Head of caudate nucleus (tissue), 42 donors: ENCODE measurements at regions of chr6 and their contacts with region 1.

Region 1: DNA sequence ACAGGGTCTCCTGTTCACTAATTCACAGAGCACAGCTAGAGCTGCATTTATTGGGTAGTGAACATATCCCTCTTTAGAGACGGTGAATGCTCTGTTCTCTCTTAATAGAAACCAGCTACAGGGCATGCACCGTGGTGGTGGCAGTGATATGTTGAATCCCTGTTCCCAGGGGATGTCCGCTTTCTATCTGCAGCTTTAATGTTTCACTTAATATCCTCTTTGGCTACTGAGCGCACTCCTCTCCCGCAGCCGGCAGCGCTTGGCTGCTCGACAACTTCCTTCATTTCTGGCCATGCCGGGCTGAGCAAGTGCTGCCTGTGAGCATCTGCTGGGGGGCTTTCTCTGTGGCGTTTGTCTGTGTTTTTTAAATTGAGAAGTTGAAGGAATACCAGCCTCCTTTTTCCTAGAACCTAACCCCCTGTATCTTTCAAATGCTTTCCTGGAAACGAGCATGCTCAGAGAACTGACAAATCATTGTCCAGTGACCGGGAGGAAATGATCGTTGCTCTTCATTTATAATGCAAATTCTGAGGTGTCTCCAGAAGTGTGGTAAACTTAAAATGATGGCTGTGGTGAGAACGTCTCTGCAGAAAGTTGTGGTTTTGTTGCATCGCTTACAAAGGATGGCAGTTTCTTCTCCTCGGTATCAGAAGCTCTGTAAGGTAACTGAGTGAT is 297.9 kb downstream of the UTRN start:
- DNase-seq: peak in 41 of 42 donors; percentile 10 to 68 (median 39)

Region 2: DNA sequence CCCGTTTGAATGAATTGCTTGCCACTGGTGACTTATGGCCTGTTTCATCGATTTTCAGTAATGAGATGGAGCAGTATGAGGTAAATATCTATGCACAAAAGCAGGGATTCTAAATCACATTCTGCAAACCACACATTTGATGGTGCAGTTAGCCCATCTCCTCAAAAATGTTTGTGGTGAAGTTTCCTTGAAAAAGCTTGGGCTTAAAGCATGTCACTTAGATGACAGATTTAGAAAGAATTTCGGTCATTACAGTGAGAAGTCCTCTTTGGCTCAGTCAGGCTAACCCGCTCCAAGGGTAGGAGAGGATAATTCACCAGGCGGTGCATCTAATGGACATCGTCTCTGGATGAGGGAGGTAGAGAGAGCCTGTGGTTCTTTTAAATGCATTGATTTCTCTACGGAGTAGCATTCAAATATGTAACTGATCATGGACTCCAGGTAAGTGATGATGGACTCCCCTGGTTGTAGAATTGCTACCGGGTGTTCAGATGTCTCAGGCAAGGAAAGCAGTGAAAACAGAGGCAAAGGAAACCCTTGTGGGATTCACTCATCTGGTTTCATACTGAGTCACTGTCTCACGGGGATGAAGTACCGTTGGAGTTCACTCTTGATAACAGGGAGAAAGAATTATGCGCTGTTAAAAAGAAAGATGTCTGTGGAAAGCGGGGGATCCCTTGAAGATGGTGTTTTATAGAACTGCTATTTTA is 1457.1 kb before region 1 on chr6:
- intact Hi-C with region 1: no loop called
- DNase-seq: no peak

Region 3: DNA sequence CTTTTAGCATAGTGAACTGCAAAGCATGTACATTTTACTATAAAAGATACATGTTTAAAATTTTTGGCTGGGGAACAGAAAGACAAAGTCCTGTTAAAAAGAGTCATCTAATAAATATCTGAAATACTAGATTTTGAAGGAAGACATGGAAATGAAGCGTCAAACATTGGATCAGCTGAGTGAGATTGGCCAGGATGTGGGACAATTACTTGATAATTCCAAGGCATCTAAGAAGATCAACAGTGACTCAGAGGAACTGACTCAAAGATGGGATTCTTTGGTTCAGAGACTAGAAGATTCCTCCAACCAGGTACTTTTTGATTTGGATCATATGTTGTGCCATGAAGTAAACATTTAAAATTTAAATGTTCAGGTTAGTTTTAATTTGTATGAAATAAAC is 135.6 kb before region 1 on chr6:
- intact Hi-C with region 1: no loop called
- DNase-seq: no peak

Region 4: GRCh38 chr6:145633981-145634627 is 1051.0 kb after region 1 on chr6:
- intact Hi-C with region 1: loop called (anchors 10 kb)
- DNase-seq: peak; percentile 75 to 97 (median 91)